ENCODE measurements at regions of chr11 and their contacts with region 1.

Region 1: DNA sequence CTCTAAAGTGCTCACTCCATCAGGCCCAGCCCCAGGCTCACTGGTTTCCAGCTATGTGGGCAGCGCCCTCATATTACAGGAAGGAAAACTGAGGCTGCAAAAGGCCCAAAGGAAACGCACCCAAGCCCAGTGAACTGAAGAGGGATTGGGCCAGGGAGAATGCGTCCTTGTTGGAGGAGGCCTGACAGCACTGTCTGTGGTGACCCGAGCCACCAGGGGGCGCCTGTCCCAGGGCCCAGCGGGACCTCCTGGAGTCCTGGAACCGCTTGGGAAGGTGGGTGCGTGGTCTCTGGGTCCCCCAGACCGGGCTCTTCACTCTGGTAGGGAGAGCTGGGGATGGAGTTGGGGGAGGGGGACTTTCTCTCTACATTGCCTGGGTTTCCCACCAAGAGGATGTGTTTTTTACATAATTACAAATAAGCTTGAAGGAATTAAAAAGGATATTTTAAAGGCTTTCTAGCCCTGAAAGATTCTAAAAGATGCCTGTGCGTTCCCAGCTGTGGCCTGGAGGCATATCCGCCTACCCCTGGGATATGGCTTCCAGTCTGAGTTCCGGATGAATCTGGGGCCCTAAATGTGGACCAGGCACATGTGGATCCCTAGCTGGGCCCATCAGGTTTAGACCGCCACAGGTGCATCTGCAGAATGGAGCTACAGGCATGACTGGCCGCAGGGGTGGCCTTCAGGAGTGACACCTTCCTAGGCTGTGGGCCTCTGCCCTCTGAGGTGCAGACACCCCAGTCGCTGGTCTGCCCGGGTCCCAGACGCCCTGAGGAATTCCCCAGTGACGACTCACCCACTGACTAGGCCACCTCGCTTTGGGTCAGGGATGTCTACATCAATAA is 4.2 kb downstream of the SPI1 start:
- DNase-seq: peak; percentile 73 to 93 (median 84)
- ATAC-seq: peak; percentile 95
- H3K4me3 ChIP-seq: no peak overlapping the region
- H3K4me3 Mint-ChIP-seq: no peak overlapping the region
- H3K27ac ChIP-seq: no peak overlapping the region
- H3K27ac Mint-ChIP-seq: no peak overlapping the region
- H3K4me1 ChIP-seq: peaks cover 13% of the 10 kb centered on the region
- H3K4me1 Mint-ChIP-seq: no peaks in the 10 kb centered on the region
- H3K27me3 ChIP-seq: no peaks in the 10 kb centered on the region
- H3K27me3 Mint-ChIP-seq: no peaks in the 10 kb centered on the region
- CTCF ChIP-seq: peak; percentile 93

Region 2: DNA sequence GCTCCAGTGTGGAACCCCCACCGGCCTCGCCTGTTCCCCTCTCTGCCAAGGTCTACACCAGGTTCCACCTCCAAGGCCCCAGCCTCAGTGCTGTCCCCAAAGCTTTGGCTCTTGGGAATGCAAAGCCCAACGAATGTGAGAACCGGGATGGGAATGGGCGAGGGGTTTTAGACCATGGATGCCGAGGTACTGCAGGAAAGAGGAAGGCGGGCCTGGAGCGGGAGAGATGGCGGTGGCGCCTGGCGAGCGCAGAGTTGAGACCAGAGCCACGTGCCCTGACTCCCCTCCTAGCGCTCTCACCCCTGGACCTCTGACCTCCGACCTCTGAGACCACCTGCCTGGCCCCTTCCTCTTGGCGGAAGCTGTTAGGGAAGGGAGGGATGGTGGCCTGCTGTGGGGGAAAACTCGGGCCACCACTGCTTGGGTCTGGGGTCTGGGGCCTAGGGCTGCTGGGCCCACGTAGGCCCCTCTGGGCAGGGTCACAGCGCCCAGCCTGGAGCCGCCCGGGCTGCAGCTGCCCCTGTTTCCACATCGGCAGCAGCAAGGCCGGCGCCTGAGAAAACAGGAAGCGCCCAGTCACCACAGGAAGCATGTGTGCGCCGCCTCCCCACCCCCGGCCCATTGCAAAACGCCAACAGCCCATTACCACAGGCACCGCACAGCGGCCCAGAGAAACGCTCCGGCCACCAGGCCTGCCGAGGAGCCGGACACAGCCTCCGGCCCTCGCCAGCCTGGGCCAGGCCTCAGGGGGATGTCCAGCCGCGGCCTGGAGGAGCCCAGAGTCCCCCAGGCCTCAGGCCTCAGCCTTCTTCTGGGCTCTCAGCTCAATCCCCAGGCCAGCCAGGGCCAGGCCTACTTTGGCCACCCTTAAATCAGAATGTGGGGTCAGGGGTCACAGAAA is 20.5 kb after region 1 on chr11:
- CTCF ChIA-PET with region 1: interaction called, 12 read pairs
- POLR2A ChIA-PET with region 1: interaction called, 12 read pairs
- intact Hi-C with region 1: loop called in 1 of 2 experiments (anchors 2 kb)
- DNase-seq: peak; percentile 28 to 81 (median 66)
- ATAC-seq: peak; percentile 80
- H3K4me3 ChIP-seq: peak overlapping the region; percentile 51
- H3K4me3 Mint-ChIP-seq: peak overlapping the region; percentile 65
- H3K27ac ChIP-seq: peak overlapping the region; percentile 83 to 93
- H3K27ac Mint-ChIP-seq: peak overlapping the region; percentile 94
- H3K4me1 ChIP-seq: peaks cover 70% of the 10 kb centered on the region
- H3K4me1 Mint-ChIP-seq: peaks cover 55% of the 10 kb centered on the region
- H3K27me3 ChIP-seq: no peaks in the 10 kb centered on the region
- H3K27me3 Mint-ChIP-seq: no peaks in the 10 kb centered on the region
- CTCF ChIP-seq: no peak

Region 3: DNA sequence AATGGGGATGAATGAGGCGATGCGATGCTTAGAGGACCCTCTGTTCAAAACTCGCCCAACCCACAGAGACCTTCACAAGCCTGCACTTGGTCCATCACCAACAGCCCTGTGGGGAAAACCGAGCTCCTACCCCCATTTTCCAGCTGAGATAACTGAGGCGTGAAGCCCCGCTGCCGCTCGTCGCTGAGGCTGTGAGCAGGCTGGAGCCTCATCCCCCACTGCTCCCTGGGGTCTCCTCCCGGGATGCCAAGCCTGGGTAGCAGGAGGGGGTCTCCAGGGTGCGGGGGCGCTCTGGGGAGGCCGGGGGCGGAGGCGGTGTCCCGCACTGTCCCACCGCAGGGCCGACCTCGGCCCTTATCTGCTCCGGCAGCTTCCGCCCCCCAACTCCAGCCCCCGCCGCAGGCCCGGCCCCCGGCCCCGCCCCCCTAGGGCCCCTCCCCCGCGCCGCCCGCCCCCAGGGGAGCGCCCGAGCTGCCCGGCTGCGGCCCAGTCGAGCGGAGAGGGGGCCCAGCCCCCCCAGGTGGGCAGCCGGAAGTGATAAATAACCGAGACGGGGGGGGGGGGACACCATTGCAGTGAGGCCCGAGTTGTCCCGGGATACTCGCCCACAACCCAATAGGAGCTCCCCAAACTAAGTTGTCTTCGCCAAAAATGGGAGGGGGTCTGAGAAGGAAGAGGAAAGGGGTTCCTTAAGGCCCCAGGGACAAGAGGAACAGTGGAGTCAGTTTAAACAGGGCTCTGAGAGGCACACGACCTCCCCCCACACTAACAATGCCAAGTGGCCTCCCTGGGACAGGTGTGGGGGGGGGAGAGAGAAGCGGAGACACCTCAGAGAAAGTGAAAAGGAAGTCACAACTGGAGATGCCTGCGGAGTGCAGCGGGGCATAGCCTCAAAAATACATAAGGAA is 26.0 kb after region 1 on chr11:
- CTCF ChIA-PET with region 1: interaction called, 12 read pairs
- POLR2A ChIA-PET with region 1: interaction called, 12 read pairs
- intact Hi-C with region 1: loop called in 1 of 2 experiments (anchors 2 kb)
- DNase-seq: peak in 10 of 14 experiments; percentile 31 to 70 (median 50)
- ATAC-seq: peak; percentile 76
- H3K4me3 ChIP-seq: peak overlapping the region; percentile 71
- H3K4me3 Mint-ChIP-seq: peak overlapping the region; percentile 90
- H3K27ac ChIP-seq: peak overlapping the region; percentile 65 to 67
- H3K27ac Mint-ChIP-seq: peak overlapping the region; percentile 78
- H3K4me1 ChIP-seq: peaks cover 34% of the 10 kb centered on the region
- H3K4me1 Mint-ChIP-seq: peaks cover 33% of the 10 kb centered on the region
- H3K27me3 ChIP-seq: no peaks in the 10 kb centered on the region
- H3K27me3 Mint-ChIP-seq: no peaks in the 10 kb centered on the region
- CTCF ChIP-seq: no peak

Region 4: DNA sequence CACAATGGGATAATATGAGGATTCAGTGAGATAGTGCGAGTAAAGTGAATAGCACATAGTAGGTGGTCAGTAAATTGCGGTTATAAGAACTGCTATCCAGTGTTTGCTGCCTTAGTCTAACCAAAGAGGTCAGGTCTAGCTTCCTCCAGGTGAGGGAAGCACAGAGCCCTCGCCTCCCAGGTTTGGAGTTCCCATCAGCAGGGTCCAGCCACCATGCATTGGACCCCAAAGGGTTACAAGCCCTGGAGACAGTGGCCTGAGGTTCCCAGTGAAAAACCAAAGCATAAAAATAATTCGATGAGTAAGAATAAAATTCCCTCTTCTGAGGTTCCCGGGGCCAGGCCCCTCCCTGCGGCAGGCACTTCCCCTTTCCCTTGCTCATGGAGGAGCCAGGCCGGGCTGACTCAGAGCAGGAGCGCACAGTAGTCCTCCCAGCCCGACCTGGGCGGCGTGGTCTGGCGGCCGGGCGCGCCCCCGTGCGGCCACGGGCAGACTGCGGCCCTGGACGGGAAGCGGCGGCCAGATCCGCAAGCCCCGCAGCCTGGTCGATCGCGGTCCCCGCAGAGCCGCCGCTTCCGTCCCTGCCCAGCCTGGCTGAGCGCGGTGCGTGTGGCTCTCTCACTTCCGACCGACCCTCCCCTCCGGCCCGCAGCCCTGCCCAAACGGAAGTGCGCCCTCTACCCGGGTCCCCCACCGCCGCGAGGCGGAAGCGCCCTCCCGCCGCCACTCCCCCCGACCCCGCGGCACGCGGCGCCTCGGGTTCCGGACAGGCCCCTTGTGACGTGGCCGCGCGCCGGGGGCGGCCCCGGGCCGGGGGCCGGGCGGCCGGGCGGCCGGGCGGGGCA is 33.9 kb after region 1 on chr11 and contains the start of gene SLC39A13:
- CTCF ChIA-PET with region 1: interaction called, 43 read pairs
- POLR2A ChIA-PET with region 1: interaction called, 11 read pairs
- intact Hi-C with region 1: loop called (anchors 1 kb)
- DNase-seq: peak; percentile 78 to 95 (median 89)
- ATAC-seq: peak; percentile 86
- H3K4me3 ChIP-seq: peak within 1 kb of the TSS; percentile 74
- H3K4me3 Mint-ChIP-seq: peak within 1 kb of the TSS; percentile 99
- H3K27ac ChIP-seq: peak within 1 kb of the TSS; percentile 84 to 88
- H3K27ac Mint-ChIP-seq: peak within 1 kb of the TSS; percentile 95
- H3K4me1 ChIP-seq: peaks cover 40% of the 10 kb centered on the region
- H3K4me1 Mint-ChIP-seq: peaks cover 17% of the 10 kb centered on the region
- H3K27me3 ChIP-seq: no peaks in the 10 kb centered on the region
- H3K27me3 Mint-ChIP-seq: no peaks in the 10 kb centered on the region
- CTCF ChIP-seq: peak; percentile 84
- total RNA-seq, gene SLC39A13: 36.6 to 39.2 TPM

Region 5: DNA sequence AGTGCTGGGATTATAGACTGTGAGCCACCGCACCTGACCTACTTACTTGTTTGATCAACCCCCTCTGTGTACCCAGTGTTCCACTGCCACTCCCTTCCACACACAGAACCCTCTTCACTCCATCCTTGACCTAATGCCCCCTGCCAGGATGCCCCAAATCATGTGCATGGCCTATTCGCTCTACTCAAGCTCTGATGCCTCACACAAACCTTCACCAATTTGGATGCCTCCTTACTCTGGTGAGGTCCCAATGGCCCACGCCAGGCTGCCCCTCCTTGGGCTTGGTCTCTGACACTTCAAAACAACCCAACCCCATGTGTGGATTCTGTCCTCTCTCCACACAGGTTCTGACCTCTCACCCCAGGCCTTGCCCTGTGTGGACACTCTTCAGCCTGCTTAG is 61.6 kb after region 1 on chr11:
- CTCF ChIA-PET with region 1: no interaction called
- POLR2A ChIA-PET with region 1: no interaction called
- intact Hi-C with region 1: no loop called
- DNase-seq: no peak
- ATAC-seq: no peak
- H3K4me3 ChIP-seq: no peak overlapping the region
- H3K4me3 Mint-ChIP-seq: no peak overlapping the region
- H3K27ac ChIP-seq: no peak overlapping the region
- H3K27ac Mint-ChIP-seq: no peak overlapping the region
- H3K4me1 ChIP-seq: no peaks in the 10 kb centered on the region
- H3K4me1 Mint-ChIP-seq: no peaks in the 10 kb centered on the region
- H3K27me3 ChIP-seq: no peaks in the 10 kb centered on the region
- H3K27me3 Mint-ChIP-seq: no peaks in the 10 kb centered on the region
- CTCF ChIP-seq: no peak

Region 6: DNA sequence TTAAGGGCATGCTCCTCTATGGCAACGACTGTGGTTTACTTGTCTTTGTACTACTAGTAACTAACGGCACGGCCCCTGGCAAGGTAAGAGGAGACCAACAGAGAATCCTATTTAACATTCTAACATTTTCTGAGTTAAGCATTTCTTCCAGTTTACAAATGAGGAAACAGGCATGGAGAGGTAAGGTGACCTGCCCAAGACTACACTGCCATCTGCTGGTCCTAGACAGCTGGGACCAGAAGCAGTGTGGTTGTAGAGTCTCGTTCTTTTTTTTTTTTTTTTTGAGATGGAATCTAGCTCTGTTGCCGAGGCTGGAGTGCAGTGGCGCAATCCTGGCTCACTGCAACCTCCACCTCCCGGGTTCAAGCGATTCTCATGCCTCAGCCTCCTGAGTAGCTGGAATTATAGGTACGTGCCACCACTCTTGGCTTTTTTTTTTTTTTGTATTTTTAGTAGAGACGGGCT is 80.1 kb after region 1 on chr11:
- CTCF ChIA-PET with region 1: interaction called, 7 read pairs
- POLR2A ChIA-PET with region 1: no interaction called
- intact Hi-C with region 1: loop called (anchors 2 kb)
- DNase-seq: peak; percentile 30 to 87 (median 55)
- ATAC-seq: peak; percentile 99
- H3K4me3 ChIP-seq: no peak overlapping the region
- H3K4me3 Mint-ChIP-seq: no peak overlapping the region
- H3K27ac ChIP-seq: no peak overlapping the region
- H3K27ac Mint-ChIP-seq: no peak overlapping the region
- H3K4me1 ChIP-seq: peaks cover 4% of the 10 kb centered on the region
- H3K4me1 Mint-ChIP-seq: peaks cover 5% of the 10 kb centered on the region
- H3K27me3 ChIP-seq: no peaks in the 10 kb centered on the region
- H3K27me3 Mint-ChIP-seq: no peaks in the 10 kb centered on the region
- CTCF ChIP-seq: peak; percentile 64